A549 (cell line): ENCODE measurements at regions of chr4 and their contacts with region 1.

Region 1: GRCh38 chr4:181528570-181529184 is 714.5 kb upstream of the TENM3 start:
- DNase-seq: peak; percentile 2 to 55
- ATAC-seq: peak; percentile 85 to 91
- H3K4me3 ChIP-seq: no peak overlapping the region
- H3K27ac ChIP-seq: no peak overlapping the region
- H3K4me1 ChIP-seq: no peaks in the 10 kb centered on the region
- CTCF ChIP-seq: peak; percentile 64
- EP300 ChIP-seq: no peak
- POLR2A ChIP-seq: no peak
- RAD21 ChIP-seq: peak; percentile 76 to 87

Region 2: DNA sequence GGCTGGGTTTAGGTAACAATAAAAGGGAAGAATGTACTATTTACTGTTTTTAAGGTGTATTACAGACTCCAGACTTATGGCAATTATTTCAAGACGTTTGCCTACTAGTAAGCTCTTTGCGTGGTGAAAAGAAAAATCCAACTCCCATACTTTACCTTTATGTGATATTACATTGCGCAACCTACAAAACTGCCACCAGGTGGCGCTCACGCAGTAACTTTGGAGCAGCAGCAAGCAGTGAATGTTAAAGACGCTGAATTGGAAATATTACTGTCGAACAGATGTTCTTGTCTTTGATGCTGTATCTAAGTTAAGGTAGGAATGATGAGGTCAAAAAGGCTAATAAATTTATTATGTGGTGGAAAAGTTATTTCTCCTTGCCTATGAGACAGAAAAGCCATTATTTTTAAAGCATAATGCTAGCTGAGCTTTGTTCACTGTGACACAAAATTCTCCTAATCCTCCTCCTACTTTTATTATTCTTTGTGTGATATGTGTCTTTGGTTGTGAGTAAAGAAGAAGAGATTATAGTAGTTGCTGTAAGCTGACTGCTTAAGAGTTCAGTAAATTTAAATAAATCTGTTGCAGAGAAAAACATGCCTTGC is 385.3 kb before region 1 on chr4:
- CTCF ChIA-PET with region 1: interaction called, 34 read pairs
- POLR2A ChIA-PET with region 1: no interaction called
- DNase-seq: peak; percentile 10 to 61
- ATAC-seq: peak; percentile 76 to 85; a peak in 5 of 6 replicates
- H3K4me3 ChIP-seq: no peak overlapping the region
- H3K27ac ChIP-seq: no peak overlapping the region
- H3K4me1 ChIP-seq: no peaks in the 10 kb centered on the region
- CTCF ChIP-seq: peak; percentile 80
- EP300 ChIP-seq: no peak
- POLR2A ChIP-seq: no peak
- RAD21 ChIP-seq: peak; percentile 77 to 85

Region 3: GRCh38 chr4:181213551-181213950 is 315.1 kb before region 1 on chr4:
- CTCF ChIA-PET with region 1: no interaction called
- POLR2A ChIA-PET with region 1: no interaction called
- DNase-seq: no peak
- ATAC-seq: no peak
- H3K4me3 ChIP-seq: no peak overlapping the region
- H3K27ac ChIP-seq: no peak overlapping the region
- H3K4me1 ChIP-seq: no peaks in the 10 kb centered on the region
- CTCF ChIP-seq: no peak
- EP300 ChIP-seq: no peak
- POLR2A ChIP-seq: no peak
- RAD21 ChIP-seq: no peak

Region 4: GRCh38 chr4:181376058-181376457 is 152.6 kb before region 1 on chr4:
- CTCF ChIA-PET with region 1: no interaction called
- POLR2A ChIA-PET with region 1: no interaction called
- DNase-seq: no peak
- ATAC-seq: no peak
- H3K4me3 ChIP-seq: no peak overlapping the region
- H3K27ac ChIP-seq: no peak overlapping the region
- H3K4me1 ChIP-seq: no peaks in the 10 kb centered on the region
- CTCF ChIP-seq: no peak
- EP300 ChIP-seq: no peak
- POLR2A ChIP-seq: no peak
- RAD21 ChIP-seq: no peak

Region 5: GRCh38 chr4:181618896-181619295 is 90.2 kb after region 1 on chr4:
- CTCF ChIA-PET with region 1: no interaction called
- POLR2A ChIA-PET with region 1: no interaction called
- DNase-seq: no peak
- ATAC-seq: no peak
- H3K4me3 ChIP-seq: no peak overlapping the region
- H3K27ac ChIP-seq: no peak overlapping the region
- H3K4me1 ChIP-seq: no peaks in the 10 kb centered on the region
- CTCF ChIP-seq: no peak
- EP300 ChIP-seq: no peak
- POLR2A ChIP-seq: no peak
- RAD21 ChIP-seq: no peak